Activated CD8-positive, alpha-beta T cell treated with anti-CD3 and anti-CD28 coated beads for 36 hours (primary cell): ENCODE measurements at regions of chr4 and their contacts with region 1.

Region 1: DNA sequence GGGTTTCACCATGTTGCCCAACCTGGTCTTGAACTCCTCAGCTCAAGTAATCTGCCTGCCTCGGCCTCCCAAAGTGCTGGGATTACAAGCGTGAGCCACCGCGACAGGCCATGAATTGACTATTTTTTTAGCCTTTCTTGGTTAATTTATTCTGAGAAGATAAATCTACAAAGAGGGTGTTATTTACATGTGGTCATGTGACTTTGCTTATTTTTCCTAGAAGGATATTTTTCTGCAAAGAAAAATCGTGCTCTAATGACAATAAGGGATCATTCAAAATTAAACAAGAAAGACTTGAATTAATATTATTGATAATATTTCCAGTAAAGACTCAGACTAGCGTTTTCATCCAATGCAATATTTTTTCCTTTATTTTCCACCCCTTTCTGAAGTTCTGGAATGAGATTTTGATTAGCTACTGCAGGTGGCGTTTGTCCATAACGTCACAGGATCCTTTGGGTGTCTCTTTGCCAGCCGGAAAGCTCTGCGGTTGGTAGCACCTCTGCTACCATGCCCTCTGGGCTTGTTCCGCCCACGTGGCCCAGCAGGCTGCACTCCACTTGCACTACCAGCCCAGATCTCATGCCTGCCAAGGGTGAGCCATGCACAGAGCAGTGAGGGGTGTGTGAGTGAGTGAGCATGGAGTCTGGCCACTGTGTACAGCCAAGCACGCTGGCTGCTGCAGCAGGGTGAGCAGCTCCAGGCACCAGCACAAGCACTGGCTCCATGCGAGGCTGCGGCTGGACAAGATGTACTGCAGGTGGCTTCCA is 6.4 kb upstream of the HNRNPD start:
- DNase-seq: no peak
- ATAC-seq: no peak
- H3K4me3 Mint-ChIP-seq: no peak overlapping the region
- H3K27ac Mint-ChIP-seq: no peak overlapping the region
- H3K4me1 Mint-ChIP-seq: peaks cover 11% of the 10 kb centered on the region
- H3K27me3 Mint-ChIP-seq: no peaks in the 10 kb centered on the region
- CTCF ChIP-seq: no peak

Region 2: GRCh38 chr4:82320356-82320755 is 59.8 kb before region 1 on chr4:
- CTCF ChIA-PET with region 1: no interaction called
- POLR2A ChIA-PET with region 1: no interaction called
- intact Hi-C with region 1: no loop called
- DNase-seq: no peak
- ATAC-seq: no peak
- H3K4me3 Mint-ChIP-seq: no peak overlapping the region
- H3K27ac Mint-ChIP-seq: no peak overlapping the region
- H3K4me1 Mint-ChIP-seq: no peaks in the 10 kb centered on the region
- H3K27me3 Mint-ChIP-seq: no peaks in the 10 kb centered on the region
- CTCF ChIP-seq: no peak

Region 3: DNA sequence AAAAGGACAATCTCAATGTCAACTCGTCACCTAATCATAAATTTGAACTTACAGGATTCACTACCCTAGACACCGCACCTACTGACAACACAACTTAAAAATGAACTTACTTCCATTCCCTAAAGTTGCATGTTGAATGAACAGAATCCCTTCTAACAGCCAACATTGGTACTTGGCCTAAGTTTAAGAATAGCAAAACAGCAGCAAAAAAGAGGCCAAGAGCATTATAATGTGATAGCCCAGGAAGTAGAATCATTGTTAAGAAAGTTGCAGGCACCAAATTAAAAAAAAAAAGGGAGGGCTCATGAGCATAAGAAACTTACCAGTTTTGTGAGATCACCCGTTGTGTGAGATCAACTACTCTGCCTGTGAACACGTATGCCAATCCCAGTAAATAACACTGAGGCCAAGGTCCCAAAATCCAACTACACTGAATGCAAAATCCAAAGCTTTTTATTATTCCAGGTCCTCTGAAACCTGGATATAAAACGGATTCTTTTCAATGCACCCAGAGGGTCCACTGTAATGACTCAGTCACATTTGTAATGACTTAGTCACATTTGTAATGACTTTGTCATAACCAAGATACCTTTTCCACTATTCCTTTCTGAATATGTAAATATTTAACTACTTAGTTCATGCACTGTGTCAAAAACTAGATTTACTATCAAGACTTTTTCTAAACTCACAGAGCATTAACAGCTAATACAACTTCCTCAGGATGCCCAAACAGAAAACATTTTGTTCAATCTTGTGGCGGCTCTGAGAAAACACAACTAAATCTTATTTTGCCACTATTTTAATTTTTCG is 43.3 kb after region 1 on chr4:
- CTCF ChIA-PET with region 1: interaction called, 6 read pairs
- POLR2A ChIA-PET with region 1: interaction called, 193 read pairs
- intact Hi-C with region 1: loop called (anchors 2 kb)
- DNase-seq: no peak
- ATAC-seq: peak; percentile 46
- H3K4me3 Mint-ChIP-seq: no peak overlapping the region
- H3K27ac Mint-ChIP-seq: peak overlapping the region; percentile 52
- H3K4me1 Mint-ChIP-seq: peaks cover 44% of the 10 kb centered on the region
- H3K27me3 Mint-ChIP-seq: no peaks in the 10 kb centered on the region
- CTCF ChIP-seq: no peak